ENCODE measurements at regions of chr7 and their contacts with region 1.

Region 1: DNA sequence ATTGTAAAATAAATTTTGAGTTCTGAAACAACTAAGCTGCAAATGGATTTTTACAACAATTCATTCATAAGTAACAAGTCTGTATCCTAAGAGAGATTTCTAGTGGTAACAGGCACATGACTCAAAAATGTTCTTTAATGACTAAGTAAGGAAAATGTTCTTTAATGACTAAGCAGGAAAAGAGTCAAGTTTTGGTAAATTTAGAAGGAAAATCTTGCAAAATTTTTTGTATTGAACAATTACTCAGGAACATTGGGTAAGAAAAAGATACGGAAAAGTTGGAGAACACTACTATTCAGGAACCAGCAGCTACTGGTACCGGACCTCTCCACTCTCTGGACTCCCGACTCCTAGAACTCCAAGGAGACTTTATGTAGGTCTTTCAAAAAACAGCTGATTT is 33.5 kb downstream of the HYCC1 start:
- DNase-seq: peak; percentile 30
- H3K4me3 ChIP-seq: no peak overlapping the region
- H3K27ac ChIP-seq: peak overlapping the region; percentile 90
- H3K27me3 ChIP-seq: no peaks in the 10 kb centered on the region
- CTCF ChIP-seq: no peak

Region 2: DNA sequence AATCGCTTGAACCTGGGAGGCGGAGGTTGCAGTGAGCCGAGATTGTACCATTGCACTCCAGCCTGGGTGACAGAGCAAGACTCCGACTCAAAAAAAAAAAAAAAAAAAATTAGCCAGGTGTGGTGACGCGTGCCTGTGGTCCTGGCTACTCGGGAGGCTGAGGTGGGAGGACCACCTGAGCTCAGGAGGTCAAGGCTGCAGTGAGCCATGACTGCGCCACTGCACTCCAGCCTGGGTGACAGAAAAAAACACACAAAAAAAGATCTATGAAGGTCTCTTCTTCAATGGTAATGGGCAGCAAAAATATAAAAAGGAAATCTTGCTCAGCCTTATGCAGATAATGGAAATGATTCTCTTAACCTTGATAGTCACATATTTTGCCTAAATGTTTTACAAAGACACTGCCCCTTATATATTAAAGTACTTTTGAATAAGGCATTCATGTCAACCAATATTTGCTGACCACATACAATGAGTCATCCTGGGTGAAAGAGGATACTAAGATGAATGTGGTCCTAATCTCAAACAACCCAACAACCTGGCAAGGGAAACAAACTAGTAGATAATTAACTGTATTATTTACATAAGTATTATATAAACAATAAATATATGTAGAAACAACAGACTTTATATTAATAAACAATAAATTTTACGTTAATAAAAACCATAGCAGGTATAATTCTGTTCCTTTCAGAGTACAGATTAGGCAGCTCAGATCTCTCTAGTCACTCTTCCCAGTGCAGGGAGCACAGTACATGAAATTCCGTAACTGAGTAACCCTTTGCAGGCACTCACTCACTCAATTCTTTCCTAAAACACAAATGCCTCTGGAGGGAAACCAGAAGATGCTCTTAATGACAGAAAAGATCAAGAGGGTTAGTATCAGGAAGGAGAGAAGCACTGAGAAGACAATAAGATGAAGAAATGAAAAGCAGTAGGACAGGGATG is 165.9 kb before region 1 on chr7:
- CTCF ChIA-PET with region 1: interaction called, 11 read pairs
- POLR2A ChIA-PET with region 1: no interaction called
- DNase-seq: no peak
- H3K4me3 ChIP-seq: no peak overlapping the region
- H3K27ac ChIP-seq: no peak overlapping the region
- H3K27me3 ChIP-seq: no peaks in the 10 kb centered on the region
- CTCF ChIP-seq: no peak

Measured in AG04450 (cell line).